ENCODE measurements at regions of chr1 and their contacts with region 1.

Region 1: DNA sequence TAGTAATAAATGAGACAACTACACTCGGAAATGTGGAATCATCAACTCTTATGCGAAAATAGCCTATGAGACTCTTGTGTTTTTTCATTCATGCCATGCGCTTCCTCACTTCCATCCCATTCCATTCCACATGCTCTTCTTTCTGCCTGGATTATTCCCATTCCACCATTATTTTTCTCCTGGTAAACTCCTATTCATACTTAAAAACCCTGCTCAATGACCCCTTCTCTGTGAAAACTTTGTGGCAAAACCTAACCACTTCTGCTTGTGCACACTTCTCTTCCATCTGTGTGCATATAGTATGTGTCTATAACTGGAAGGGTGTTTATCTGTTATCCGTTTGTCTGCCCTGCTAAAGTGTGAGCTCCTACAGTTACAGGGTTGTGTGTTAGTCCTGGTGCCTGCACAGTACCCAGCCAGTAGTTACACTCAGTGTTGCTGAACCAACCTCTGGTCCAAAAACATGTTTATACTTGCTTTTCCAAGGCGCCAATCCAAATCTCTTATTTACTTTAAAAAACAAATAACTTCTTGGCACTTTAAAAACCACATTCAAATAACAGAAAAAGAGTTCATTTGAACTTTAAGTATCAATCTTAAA is 10.7 kb downstream of the EPHX1 start:
- DNase-seq: peak; percentile 64
- ATAC-seq: peak; percentile 60
- H3K4me3 ChIP-seq: no peak overlapping the region
- H3K27ac ChIP-seq: no peak overlapping the region
- H3K4me1 ChIP-seq: peaks cover 30% of the 10 kb centered on the region
- H3K27me3 ChIP-seq: no peaks in the 10 kb centered on the region
- CTCF ChIP-seq: no peak

Region 2: DNA sequence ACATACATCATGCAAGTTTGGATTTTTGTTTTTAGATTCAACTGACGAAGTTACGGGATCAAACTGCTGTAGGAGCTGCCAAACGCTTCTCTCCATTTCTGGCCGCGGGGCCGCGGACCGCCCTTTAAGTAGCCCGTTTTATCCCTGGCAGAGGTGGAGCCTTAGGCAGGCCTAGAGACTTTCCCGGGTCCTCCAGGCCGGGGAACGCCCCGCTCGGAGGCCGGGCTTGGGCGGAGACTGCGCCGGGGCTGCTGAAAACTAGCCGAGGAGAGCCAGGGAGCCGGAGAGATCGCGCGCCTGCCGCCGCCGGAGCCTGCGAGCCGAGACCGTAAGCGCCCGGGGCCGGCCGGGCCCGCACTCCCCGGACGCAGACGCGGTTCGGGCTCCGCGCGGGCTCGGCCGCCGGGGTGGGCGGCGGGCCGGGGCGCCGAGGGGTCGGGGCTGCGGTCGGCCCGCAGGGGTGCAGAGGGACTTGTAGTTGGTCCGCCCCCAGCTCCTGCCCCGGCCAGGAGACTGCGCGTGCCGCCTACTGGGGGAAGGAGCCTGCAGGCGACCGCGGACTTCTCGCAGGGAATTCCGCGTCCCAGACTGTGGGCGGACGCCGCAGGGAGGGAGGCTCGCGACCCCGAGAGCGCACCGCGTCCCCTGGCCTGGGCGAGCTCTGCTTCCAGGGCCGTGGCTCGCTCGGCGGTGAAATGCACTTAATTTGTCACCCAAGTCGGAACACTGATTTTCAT is 10.6 kb before region 1 on chr1 and contains the start of gene EPHX1:
- CTCF ChIA-PET with region 1: no interaction called
- POLR2A ChIA-PET with region 1: no interaction called
- intact Hi-C with region 1: loop called (anchors 1 kb)
- DNase-seq: peak; percentile 95
- ATAC-seq: peak; percentile 97
- H3K4me3 ChIP-seq: peak within 1 kb of the TSS; percentile 87
- H3K27ac ChIP-seq: peak within 1 kb of the TSS; percentile 6; the same call in 1 of the 2 replicates
- H3K4me1 ChIP-seq: peaks cover 20% of the 10 kb centered on the region
- H3K27me3 ChIP-seq: no peaks in the 10 kb centered on the region
- CTCF ChIP-seq: no peak
- total RNA-seq, gene EPHX1: 54.6 and 69.2 TPM in 2 replicates

Region 3: DNA sequence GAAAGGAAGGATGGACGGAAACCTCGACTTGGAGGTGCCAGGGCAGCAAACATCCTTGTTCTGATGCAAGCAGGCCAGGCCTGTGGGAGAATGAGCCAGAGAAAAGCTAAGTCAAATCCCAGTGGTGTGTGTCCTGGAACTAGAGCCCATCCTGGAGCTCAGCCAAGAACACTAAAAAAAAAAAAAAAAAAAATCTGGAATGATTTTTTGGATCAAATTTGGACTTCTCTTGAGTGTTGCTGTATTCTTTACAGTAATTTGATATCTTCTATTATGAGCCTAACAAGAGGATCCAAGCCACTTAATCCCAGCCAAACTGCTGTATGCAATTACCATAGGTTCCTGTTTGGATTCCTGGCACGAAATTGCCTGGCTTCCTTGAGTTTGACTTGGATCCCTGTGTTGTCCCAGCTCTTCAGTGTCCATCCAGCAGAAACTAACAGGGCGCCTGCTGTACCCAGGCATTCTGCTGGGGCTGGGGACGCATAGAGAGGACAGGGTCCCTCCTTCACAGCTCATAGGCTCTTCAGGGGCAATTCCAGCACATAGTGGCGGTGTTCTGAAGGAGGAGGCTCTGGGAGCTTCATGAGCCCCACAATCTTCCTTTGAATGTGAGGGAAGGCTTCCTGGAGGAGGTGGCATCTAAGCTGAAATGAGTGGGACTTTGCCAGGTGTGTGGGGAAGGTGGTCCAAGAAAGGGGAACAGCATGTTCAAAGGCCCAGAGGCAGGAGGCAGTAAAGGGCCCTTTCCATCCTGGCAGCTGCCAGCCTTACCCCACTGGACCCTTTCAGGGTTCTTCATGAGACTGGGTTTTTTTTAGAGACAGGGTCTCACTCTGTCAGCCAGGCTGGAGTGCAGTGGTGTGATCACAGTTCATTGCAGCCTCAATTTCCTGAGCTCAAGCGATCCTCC is 14.1 kb after region 1 on chr1:
- CTCF ChIA-PET with region 1: no interaction called
- POLR2A ChIA-PET with region 1: no interaction called
- intact Hi-C with region 1: loop called (anchors 2 kb)
- DNase-seq: no peak
- ATAC-seq: peak; percentile 55
- H3K4me3 ChIP-seq: no peak overlapping the region
- H3K27ac ChIP-seq: no peak overlapping the region
- H3K4me1 ChIP-seq: no peaks in the 10 kb centered on the region
- H3K27me3 ChIP-seq: no peaks in the 10 kb centered on the region
- CTCF ChIP-seq: no peak

Measured in PC-3 (cell line).